ENCODE measurements at regions of chr11 and their contacts with region 1.

Region 1: DNA sequence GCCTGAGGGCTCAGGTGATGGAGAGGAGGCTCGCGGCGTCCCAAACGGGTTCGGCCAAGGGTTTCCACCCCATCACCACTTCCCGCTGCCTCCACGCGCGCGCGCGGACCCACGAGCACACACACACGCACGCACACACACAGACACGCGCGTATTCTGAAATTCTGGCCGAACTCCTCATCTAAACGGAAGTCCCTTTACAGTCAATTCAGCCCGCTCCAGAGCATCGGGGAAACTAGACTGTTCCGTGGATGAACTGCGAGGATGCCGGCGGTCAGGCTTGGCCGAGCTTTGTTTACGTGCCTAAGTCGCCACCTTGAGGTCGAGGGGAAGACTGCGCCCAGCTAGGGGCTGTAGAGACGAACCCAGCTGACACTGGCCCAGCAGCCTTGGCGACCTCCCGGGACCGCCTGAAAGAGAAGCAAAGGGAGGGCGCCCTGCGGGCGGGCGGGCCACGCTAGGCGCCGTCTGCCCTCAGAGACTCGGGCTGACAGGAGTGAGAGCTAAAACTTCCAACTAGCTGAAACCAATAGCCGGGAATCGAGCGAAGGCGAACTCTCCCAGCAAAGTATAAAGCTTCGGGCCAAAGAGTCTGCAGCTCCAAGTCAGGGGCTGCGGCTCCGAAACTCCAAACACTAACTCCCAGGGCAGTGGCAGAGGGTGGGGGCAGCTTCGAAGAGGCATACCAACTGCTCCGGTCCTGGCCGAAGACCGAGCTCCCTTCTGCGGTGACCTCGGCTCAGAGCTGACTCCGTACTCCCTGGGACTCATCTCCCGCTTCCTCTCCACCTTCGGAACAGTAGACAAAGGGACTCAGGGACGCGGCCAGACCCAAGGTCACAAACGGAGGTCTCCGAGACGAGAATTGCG is 124.7 kb upstream of the C11orf58 start:
- DNase-seq: peak; percentile 71
- H3K4me3 ChIP-seq: peak overlapping the region in 2 of 3 experiments; percentile 4 to 7
- H3K27ac ChIP-seq: no peak overlapping the region
- H3K4me1 ChIP-seq: peaks cover 13% of the 10 kb centered on the region
- H3K27me3 ChIP-seq: peaks cover 42 to 76% of the 10 kb centered on the region in 2 experiments
- CTCF ChIP-seq: peak; percentile 89 to 90
- POLR2A ChIP-seq: no peak

Region 2: DNA sequence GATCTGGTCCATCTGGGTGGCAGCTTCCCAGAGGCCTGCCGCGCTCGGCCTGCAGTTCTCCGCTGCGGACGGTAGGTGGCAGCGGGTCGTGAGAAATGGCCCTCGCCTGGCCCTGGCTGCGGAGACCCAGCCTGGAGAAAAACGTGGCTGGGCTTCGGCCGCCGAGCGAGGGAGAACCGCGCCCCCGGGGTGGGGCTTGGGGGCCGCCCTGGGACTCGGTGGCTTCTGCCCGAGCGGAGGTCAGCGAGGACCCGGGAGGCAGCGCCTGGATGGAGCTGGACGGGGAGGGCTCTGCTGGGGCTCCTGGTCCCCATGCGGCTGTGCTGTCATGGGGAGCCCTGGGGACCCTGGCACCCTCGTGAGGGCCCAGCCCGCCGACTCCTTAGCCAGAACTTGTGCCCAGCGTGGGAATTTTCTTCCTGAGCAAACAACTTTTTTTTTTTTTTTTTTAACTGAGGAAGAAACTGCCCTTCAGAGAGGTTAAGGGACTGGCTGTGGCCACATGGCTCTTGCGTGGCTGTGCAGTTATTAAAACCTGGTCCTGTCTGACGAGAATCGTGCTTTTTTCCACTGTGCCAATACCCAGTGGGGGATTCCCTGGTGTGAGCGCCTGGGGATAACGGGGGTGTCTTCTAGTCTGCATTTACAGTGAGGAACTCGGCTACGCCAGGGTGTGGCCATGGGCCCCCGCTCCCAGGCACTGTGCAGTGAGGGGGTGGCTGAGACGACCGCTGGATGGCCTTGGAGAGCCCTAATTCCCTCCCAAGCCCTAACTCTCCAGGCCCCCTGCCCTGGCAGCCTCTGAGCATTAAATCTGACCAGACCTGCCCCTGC is 963.4 kb before region 1 on chr11:
- CTCF ChIA-PET with region 1: interaction called, 77 read pairs
- POLR2A ChIA-PET with region 1: no interaction called
- dilution Hi-C with region 1: no loop called
- intact Hi-C with region 1: loop called (anchors 1 kb)
- DNase-seq: peak; percentile 90
- H3K4me3 ChIP-seq: peak overlapping the region in 2 of 3 experiments; percentile 19 to 24
- H3K27ac ChIP-seq: no peak overlapping the region
- H3K4me1 ChIP-seq: peaks cover 3% of the 10 kb centered on the region
- H3K27me3 ChIP-seq: no peaks in the 10 kb centered on the region
- CTCF ChIP-seq: peak; percentile 91 to 98
- POLR2A ChIP-seq: no peak

Region 3: GRCh38 chr11:15819679-15820286 is 794.0 kb before region 1 on chr11:
- CTCF ChIA-PET with region 1: interaction called, 96 read pairs
- POLR2A ChIA-PET with region 1: no interaction called
- dilution Hi-C with region 1: no loop called
- intact Hi-C with region 1: loop called (anchors 1 kb)
- DNase-seq: peak; percentile 61
- H3K4me3 ChIP-seq: no peak overlapping the region
- H3K27ac ChIP-seq: no peak overlapping the region
- H3K4me1 ChIP-seq: no peaks in the 10 kb centered on the region
- H3K27me3 ChIP-seq: peaks cover 3 to 16% of the 10 kb centered on the region in 2 experiments
- CTCF ChIP-seq: peak; percentile 82 to 95
- POLR2A ChIP-seq: no peak

Region 4: GRCh38 chr11:15852179-15852578 is 761.6 kb before region 1 on chr11:
- CTCF ChIA-PET with region 1: interaction called, 44 read pairs
- POLR2A ChIA-PET with region 1: no interaction called
- dilution Hi-C with region 1: no loop called
- intact Hi-C with region 1: loop called (anchors 1 kb)
- DNase-seq: no peak
- H3K4me3 ChIP-seq: no peak overlapping the region
- H3K27ac ChIP-seq: no peak overlapping the region
- H3K4me1 ChIP-seq: no peaks in the 10 kb centered on the region
- H3K27me3 ChIP-seq: peaks cover 0 to 2% of the 10 kb centered on the region in 2 experiments
- CTCF ChIP-seq: peak; percentile 21 to 30
- POLR2A ChIP-seq: no peak

Region 5: DNA sequence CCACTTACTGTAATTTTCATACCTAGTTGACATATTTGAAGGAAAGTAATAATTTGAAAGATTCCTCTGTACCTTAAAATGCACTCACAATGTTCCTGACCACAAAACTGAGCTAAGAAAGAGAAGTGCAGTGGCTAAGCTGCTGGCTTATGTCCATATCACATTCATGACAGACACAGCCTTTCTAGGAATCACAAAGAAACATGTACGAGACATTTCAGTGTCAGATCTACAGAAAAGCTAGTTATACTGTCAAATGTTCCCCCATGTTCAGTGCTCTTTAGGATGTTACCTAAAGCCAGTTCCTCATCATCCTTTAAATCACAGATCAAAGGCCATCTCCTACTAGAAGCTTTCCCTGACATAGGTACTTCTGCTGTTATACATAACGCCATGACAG is 17.5 kb before region 1 on chr11:
- CTCF ChIA-PET with region 1: interaction called, 28 read pairs
- POLR2A ChIA-PET with region 1: no interaction called
- dilution Hi-C with region 1: no loop called
- intact Hi-C with region 1: no loop called
- DNase-seq: no peak
- H3K4me3 ChIP-seq: no peak overlapping the region
- H3K27ac ChIP-seq: no peak overlapping the region
- H3K4me1 ChIP-seq: no peaks in the 10 kb centered on the region
- H3K27me3 ChIP-seq: peaks cover 0 to 2% of the 10 kb centered on the region in 2 experiments
- CTCF ChIP-seq: no peak
- POLR2A ChIP-seq: no peak

Region 6: DNA sequence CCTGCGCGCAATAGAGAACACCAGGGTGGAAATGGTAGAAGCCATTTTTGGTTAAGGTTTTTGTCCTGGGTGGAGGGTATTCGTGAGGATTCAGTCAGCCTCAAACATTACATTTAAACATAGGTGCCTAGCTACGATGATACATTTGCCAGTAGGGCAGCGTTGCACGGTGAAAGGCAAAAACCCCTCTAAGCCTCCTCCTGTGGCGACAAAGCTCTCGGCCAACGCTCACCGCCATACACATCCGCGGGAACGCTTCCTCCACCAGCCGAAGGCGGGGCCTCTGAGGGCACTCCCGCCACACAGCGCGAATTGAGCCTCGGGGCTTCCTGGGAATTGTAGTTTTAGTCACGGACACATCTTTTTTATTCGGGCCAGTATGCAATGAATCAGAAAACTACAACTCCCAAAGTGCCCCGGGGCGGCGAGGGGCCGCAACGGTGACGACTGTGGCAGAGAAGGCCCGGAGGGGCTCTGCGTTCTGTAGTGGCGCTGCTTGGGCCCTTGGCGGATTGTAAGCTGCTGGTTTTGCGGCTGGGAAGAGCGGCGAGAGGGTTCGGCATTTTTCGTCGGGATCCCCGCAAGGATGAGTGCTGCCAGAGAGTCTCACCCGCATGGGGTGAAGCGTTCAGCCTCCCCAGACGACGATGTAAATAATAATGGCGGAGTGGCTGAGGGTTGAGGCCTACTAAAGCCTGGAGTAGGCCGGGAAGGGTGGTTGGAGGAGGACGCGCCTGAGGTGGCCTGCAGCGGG is 124.6 kb after region 1 on chr11 and contains the start of gene C11orf58:
- CTCF ChIA-PET with region 1: no interaction called
- POLR2A ChIA-PET with region 1: no interaction called
- dilution Hi-C with region 1: no loop called
- intact Hi-C with region 1: loop called (anchors 5 kb)
- DNase-seq: peak; percentile 99
- H3K4me3 ChIP-seq: peak within 1 kb of the TSS; percentile 80 to 94 (median 87)
- H3K27ac ChIP-seq: peak within 1 kb of the TSS; percentile 98
- H3K4me1 ChIP-seq: peaks cover 18% of the 10 kb centered on the region
- H3K27me3 ChIP-seq: no peaks in the 10 kb centered on the region
- CTCF ChIP-seq: no peak
- POLR2A ChIP-seq: peak; percentile 92
- total RNA-seq, gene C11orf58: 131 and 150 TPM in 2 replicates

Measured in endothelial cell of umbilical vein (primary cell).